H1 (cell line): ENCODE measurements at regions of chr12 and their contacts with region 1.

Region 1: DNA sequence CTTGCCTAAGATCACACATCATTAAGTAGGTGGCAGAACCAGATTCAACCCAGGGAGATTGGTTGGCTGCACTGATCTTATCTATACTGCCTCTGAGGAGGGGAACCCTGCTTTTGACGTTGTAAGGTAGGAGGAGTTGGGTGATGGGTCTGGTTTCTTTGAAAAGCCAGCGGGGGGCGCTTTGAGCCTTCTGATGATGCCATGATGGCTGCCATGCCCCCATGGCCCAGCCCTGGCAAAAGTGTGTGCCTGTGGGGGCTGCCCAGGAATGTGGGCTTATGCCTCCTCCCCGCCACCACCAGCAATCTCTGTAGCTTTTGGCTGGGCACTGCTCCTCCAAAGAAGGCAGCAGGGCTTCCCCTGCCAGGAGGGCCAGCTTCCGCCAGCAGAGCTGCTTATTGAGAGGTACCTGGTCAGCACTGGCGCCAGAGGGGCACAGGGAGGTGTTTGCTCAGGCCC is 224.3 kb downstream of the SLC41A2 start:
- DNase-seq: peak in 1 of 2 experiments; percentile 79
- H3K4me3 ChIP-seq: no peak overlapping the region
- H3K27ac ChIP-seq: no peak overlapping the region
- H3K4me1 ChIP-seq: peaks cover 0 to 9% (median 6%) of the 10 kb centered on the region in 4 experiments; a peak in 5 of 7 replicates
- H3K27me3 ChIP-seq: no peaks in the 10 kb centered on the region
- CTCF ChIP-seq: peak; percentile 12 to 55 (median 40); a peak in 3 of 4 replicates
- EP300 ChIP-seq: no peak
- POLR2A ChIP-seq: no peak
- RAD21 ChIP-seq: peak; percentile 77

Region 2: GRCh38 chr12:104809706-104810385 is 76.1 kb after region 1 on chr12:
- CTCF ChIA-PET with region 1: no interaction called
- POLR2A ChIA-PET with region 1: no interaction called
- DNase-seq: no peak
- H3K4me3 ChIP-seq: no peak overlapping the region
- H3K27ac ChIP-seq: no peak overlapping the region
- H3K4me1 ChIP-seq: no peaks in the 10 kb centered on the region
- H3K27me3 ChIP-seq: no peaks in the 10 kb centered on the region
- CTCF ChIP-seq: no peak
- EP300 ChIP-seq: no peak
- POLR2A ChIP-seq: no peak
- RAD21 ChIP-seq: no peak

Region 3: DNA sequence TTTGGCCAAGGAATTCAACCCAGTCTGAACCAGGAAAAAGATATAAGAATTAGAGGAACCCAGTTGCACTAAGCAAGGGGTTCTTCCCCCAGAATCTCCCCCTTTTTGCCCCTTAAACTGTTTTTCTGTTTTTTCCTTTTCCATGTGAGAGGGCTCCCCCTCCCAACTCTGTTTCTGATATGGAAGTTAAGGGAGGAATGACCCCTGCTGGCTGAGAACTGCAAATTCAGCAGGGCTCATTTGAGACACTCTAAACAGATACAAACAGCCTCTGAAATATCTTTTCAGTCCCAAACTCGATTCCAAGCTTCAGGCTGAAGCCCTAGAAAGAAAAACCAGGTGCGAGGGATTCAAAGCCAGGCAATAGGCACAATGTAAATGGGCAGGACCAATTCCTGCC is 91.7 kb after region 1 on chr12:
- CTCF ChIA-PET with region 1: interaction called, 15 read pairs
- POLR2A ChIA-PET with region 1: no interaction called
- DNase-seq: no peak
- H3K4me3 ChIP-seq: no peak overlapping the region
- H3K27ac ChIP-seq: no peak overlapping the region
- H3K4me1 ChIP-seq: no peaks in the 10 kb centered on the region
- H3K27me3 ChIP-seq: no peaks in the 10 kb centered on the region
- CTCF ChIP-seq: peak in 2 of 3 experiments; percentile 18 to 27; a peak in 2 of 4 replicates
- EP300 ChIP-seq: no peak
- POLR2A ChIP-seq: no peak
- RAD21 ChIP-seq: peak; percentile 56 to 66